Left cardiac atrium (tissue), 4 donors: ENCODE measurements at regions of chrX and their contacts with region 1.

Region 1: GRCh38 chrX:148204195-148204594 is 223.1 kb downstream of the FMR1NB start:
- DNase-seq: no peak
- ATAC-seq: no peak

Region 2: GRCh38 chrX:148459343-148459742 is 255.1 kb after region 1 on chrX:
- intact Hi-C with region 1: no loop called
- DNase-seq: no peak
- ATAC-seq: no peak

Region 3: DNA sequence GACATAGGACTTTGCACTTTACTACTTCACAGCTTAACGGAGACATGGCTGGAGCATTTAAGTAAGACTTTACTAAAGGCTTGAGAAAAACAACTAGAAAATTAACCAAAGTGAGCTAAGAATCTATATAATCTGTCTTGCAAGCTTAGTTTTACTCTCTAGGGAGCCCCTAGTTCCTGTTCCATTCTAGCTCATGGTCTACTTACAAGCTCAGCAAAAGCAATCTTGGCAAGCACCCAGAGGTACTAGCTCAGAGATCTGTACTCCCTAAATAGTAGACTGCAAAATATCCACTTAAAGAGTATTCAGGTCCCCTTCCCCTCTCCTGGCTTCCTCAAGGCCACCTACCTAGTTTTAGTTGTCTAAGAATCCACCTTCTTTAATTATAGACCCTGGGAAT is 831.9 kb after region 1 on chrX:
- intact Hi-C with region 1: loop called in 1 of 2 experiments (anchors 5 kb)
- DNase-seq: no peak
- ATAC-seq: no peak